T-cell (primary cell): ENCODE measurements at regions of chr2 and their contacts with region 1.

Region 1: DNA sequence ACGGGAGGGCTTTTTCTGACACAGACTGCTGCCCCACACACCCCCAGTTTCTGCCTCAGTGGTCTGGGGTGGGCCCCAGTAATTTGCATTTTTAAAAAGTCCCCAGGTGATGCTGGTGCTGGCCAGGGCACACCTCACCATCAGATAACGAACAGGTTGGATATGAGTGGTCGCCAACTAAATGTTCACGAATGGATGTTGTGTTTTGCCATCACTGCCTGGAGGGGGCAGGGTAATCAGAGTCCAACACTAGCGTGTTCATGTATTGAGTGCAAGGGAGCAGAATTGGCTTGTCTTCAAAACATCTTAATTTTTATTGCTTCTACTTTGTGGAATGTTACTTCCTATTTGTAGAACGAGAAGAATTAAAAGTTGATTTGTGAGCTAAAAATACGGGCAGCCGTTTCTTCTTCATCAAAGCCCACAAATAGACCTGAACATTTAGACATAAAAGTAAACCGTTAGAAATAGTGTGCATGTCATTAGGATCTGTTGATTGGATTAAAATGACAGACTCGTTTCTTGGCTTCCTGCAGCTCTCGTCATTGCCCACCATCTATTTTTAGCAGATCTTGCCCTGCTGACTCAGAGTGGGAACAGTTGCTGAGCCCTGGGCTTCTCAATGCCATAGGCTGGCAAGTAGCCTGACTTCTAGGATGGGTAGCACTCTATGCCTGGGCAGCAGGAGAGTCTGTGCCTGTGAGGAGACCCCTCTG is 45.2 kb downstream of the NCK2 start:
- DNase-seq: peak in 22 of 35 experiments; percentile 28 to 73 (median 49)
- ATAC-seq: peak; percentile 71 to 83 (median 76)
- H3K4me3 ChIP-seq: peak overlapping the region in 1 of 2 donors; percentile 24
- H3K4me3 Mint-ChIP-seq: peak overlapping the region; percentile 6 to 73 (median 56)
- H3K27ac ChIP-seq: peak overlapping the region; percentile 88
- H3K27ac Mint-ChIP-seq: peak overlapping the region; percentile 93
- H3K4me1 ChIP-seq: peaks cover 62 to 88% of the 10 kb centered on the region in 2 experiments
- H3K4me1 Mint-ChIP-seq: peaks cover 92 to 97% (median 95%) of the 10 kb centered on the region in 3 donors
- H3K27me3 ChIP-seq: no peaks in the 10 kb centered on the region
- H3K27me3 Mint-ChIP-seq: no peaks in the 10 kb centered on the region

Region 2: DNA sequence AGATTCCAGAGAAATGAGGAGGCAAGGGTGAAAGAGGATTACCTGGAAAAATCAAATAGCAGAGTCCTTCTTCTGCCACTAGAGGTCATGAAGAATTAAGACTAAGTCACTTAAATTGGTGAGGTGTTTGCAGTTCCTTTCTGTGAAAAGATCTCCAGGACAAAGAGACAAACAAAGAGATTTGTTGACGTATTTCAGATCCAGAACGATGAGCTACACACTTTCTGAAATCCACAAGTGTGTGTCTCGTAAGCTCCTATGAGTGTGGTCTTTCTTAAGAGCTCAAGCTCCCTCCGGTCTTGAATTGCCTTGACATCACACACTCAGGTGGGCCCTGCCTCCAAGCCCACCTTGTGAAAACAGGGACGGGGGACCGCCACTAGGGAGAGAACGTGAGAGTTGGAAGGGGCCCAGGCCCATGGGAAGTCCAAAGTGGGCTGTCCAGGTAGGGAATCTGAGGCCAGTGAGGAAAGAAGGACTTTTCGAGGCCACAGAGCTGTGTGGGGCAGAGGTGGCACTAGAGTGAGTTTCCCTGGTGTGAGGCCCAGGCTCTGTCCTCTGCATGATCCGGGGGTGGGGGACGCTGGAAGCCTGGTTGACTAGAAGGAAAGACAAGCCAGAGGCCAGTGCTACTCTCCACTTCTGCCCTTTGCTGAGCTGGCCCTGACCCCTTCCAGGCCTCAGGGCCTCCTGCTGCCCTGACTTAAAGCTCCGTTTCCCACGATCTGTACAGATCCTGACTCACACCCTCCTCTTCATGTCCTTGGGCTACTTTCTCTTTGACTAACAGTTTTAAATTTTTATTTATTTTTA is 213.3 kb before region 1 on chr2:
- CTCF ChIA-PET with region 1: interaction called in 1 of 2 experiments, 48 read pairs
- POLR2A ChIA-PET with region 1: no interaction called
- DNase-seq: peak in 3 of 35 experiments; percentile 10 to 61 (median 24)
- ATAC-seq: peak; percentile 52 to 74 (median 70)
- H3K4me3 ChIP-seq: no peak overlapping the region
- H3K4me3 Mint-ChIP-seq: no peak overlapping the region
- H3K27ac ChIP-seq: peak overlapping the region; percentile 26
- H3K27ac Mint-ChIP-seq: peak overlapping the region; percentile 87 to 90
- H3K4me1 ChIP-seq: peaks cover 0 to 13% of the 10 kb centered on the region in 2 experiments
- H3K4me1 Mint-ChIP-seq: peaks cover 15 to 30% (median 24%) of the 10 kb centered on the region in 3 donors
- H3K27me3 ChIP-seq: peaks cover 0 to 14% of the 10 kb centered on the region in 2 experiments
- H3K27me3 Mint-ChIP-seq: peaks cover 0 to 3% of the 10 kb centered on the region in 2 donors

Region 3: DNA sequence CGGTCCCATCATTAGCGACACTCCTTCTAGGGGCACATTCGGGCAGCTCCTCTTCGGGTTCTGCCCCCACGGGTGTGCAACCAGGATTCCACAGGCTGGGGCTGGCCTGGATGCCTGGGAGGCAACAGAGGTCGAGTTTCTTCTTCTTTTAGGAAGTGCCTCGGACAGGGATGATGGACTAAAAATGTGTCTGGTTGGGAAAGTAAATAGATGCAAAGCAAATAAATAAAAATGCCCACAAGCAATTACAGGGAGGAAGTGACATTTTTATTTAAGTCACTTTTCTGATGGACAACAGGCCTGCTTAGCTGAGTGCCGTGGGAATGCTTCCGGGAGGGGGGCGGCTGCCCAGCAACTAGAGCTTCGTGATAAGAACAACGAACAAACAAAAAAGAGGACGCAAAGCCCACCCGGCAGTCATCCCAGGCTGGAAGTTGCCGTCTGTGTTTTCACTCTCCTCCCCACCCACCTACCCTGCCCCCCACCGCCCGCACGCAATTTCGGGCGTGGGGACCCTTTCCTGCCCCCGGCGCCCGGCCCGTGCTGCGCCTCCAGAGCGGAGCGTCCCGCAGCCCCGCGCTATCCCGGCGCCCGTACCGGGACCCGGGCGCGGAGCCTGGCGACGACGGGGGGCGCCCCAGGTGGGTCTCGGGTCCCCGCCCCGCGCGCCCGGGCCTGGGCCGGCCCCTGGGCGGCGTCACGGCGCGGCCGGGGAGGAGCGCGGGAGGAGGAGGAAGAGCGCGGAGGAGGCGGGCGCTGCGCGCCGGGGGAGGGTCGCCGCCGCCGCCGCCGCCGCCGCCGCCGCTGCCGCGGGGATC is 45.6 kb before region 1 on chr2:
- CTCF ChIA-PET with region 1: interaction called in 1 of 2 experiments, 20 read pairs
- POLR2A ChIA-PET with region 1: interaction called, 3 to 8 read pairs
- DNase-seq: peak in 34 of 35 experiments; percentile 44 to 85 (median 65)
- ATAC-seq: peak; percentile 80 to 86 (median 82)
- H3K4me3 ChIP-seq: peak overlapping the region in 1 of 2 donors; percentile 53
- H3K4me3 Mint-ChIP-seq: peak overlapping the region; percentile 78 to 89 (median 88)
- H3K27ac ChIP-seq: peak overlapping the region; percentile 66
- H3K27ac Mint-ChIP-seq: peak overlapping the region; percentile 95 to 100
- H3K4me1 ChIP-seq: peaks cover 47 to 72% of the 10 kb centered on the region in 2 experiments
- H3K4me1 Mint-ChIP-seq: peaks cover 78 to 87% (median 79%) of the 10 kb centered on the region in 3 donors
- H3K27me3 ChIP-seq: no peaks in the 10 kb centered on the region
- H3K27me3 Mint-ChIP-seq: no peaks in the 10 kb centered on the region

Region 4: DNA sequence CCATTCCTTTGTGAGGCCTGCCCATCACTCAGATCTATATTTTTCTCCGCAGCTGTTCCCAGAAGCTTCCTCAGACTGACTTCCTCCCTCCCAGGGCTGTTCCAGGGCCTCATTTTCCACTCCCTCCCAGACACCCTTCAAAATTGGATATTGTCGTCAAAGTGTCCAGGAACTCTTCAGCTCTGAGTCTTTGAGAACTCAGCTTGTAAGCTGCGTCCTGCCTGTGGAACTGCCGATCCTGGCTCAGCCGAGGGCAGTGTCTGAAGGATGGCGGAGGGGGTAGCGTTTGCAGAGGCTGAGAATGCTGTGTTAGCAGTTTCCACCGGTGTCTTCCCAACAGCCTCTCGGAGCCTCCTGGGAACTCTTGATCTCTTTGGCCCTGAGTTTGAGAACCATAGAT is 18.1 kb before region 1 on chr2:
- CTCF ChIA-PET with region 1: interaction called in 1 of 2 experiments, 16 read pairs
- POLR2A ChIA-PET with region 1: no interaction called
- DNase-seq: no peak
- ATAC-seq: no peak
- H3K4me3 ChIP-seq: no peak overlapping the region
- H3K4me3 Mint-ChIP-seq: no peak overlapping the region
- H3K27ac ChIP-seq: peak overlapping the region; percentile 16
- H3K27ac Mint-ChIP-seq: peak overlapping the region; percentile 94 to 98
- H3K4me1 ChIP-seq: peaks cover 48 to 84% of the 10 kb centered on the region in 2 experiments
- H3K4me1 Mint-ChIP-seq: peaks cover 90 to 100% (median 96%) of the 10 kb centered on the region in 3 donors
- H3K27me3 ChIP-seq: no peaks in the 10 kb centered on the region
- H3K27me3 Mint-ChIP-seq: no peaks in the 10 kb centered on the region

Region 5: DNA sequence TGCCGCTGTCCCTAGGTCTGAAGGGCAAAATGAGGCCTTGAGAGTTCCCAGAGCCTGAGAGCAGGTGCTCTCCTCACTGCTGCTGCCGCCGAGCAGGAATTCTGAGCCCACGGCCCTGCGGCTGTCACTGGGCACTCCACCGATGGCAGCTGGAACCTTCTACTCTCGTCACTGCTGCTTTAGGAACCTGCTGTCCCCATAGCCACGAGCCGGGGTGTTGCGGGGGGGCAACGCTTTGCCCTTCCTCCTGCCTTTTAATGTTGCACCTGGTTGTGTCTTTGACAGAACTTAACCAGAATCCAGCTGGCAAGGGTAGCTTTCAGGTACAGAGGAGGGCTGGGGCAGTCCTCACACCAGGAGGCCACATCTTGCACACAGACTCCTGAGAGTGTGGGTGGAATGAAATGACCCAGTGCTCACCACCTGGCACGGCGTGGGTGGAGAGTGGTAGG is 12.8 kb before region 1 on chr2:
- CTCF ChIA-PET with region 1: interaction called, 3 to 16 read pairs
- POLR2A ChIA-PET with region 1: no interaction called
- DNase-seq: peak in 9 of 35 experiments; percentile 19 to 54 (median 38)
- ATAC-seq: peak in 3 of 4 experiments; percentile 20 to 42 (median 35)
- H3K4me3 ChIP-seq: peak overlapping the region in 1 of 2 donors; percentile 33
- H3K4me3 Mint-ChIP-seq: peak overlapping the region; percentile 58 to 82 (median 71)
- H3K27ac ChIP-seq: peak overlapping the region; percentile 91
- H3K27ac Mint-ChIP-seq: peak overlapping the region; percentile 88 to 98
- H3K4me1 ChIP-seq: peaks cover 69 to 91% of the 10 kb centered on the region in 2 experiments
- H3K4me1 Mint-ChIP-seq: peaks cover 95 to 98% (median 98%) of the 10 kb centered on the region in 3 donors
- H3K27me3 ChIP-seq: no peaks in the 10 kb centered on the region
- H3K27me3 Mint-ChIP-seq: no peaks in the 10 kb centered on the region

Region 6: GRCh38 chr2:105857076-105857740 is 67.3 kb after region 1 on chr2:
- CTCF ChIA-PET with region 1: interaction called, 11 read pairs
- POLR2A ChIA-PET with region 1: interaction called in 1 of 2 experiments, 3 read pairs
- DNase-seq: peak in 16 of 35 experiments; percentile 10 to 79 (median 22)
- ATAC-seq: peak; percentile 21 to 63 (median 36)
- H3K4me3 ChIP-seq: peak overlapping the region in 1 of 2 donors; percentile 44
- H3K4me3 Mint-ChIP-seq: peak overlapping the region; percentile 74 to 81 (median 79)
- H3K27ac ChIP-seq: peak overlapping the region; percentile 86
- H3K27ac Mint-ChIP-seq: peak overlapping the region; percentile 97 to 98
- H3K4me1 ChIP-seq: peaks cover 49 to 68% of the 10 kb centered on the region in 2 experiments
- H3K4me1 Mint-ChIP-seq: peaks cover 86 to 92% (median 90%) of the 10 kb centered on the region in 3 donors
- H3K27me3 ChIP-seq: no peaks in the 10 kb centered on the region
- H3K27me3 Mint-ChIP-seq: no peaks in the 10 kb centered on the region